Sigmoid colon (tissue), 7 donors: ENCODE measurements at regions of chr16 and their contacts with region 1.

Region 1: DNA sequence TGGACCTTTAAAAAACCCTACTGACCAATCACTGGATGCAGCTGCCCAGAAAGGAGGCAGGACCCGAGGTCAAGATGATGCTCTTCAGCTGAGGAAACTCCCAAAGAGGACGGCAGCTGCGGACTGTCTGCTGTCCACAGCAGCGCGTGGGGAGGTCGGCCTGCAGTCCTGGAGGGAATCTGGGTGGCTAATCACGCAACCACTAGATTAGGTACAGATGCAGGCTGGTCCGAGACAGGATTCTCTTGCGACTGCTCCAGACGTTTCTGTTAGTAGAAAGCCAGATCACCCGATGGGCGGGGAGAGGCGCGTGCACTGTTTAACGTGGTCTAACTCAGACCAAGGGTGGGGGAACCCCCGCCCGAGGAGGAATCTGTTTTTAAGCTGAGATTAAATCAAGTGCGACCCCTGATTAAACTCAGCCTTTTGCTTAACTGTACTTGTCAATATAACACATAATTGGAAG is 8.8 kb downstream of the CTRB2 start:
- DNase-seq: no peak
- H3K4me3 ChIP-seq: no peak overlapping the region
- H3K27ac ChIP-seq: no peak overlapping the region
- H3K4me1 ChIP-seq: peaks cover 0 to 8% (median 3%) of the 10 kb centered on the region in 4 donors
- H3K27me3 ChIP-seq: peaks cover 0 to 30% (median 0%) of the 10 kb centered on the region in 3 donors
- CTCF ChIP-seq: no peak
- EP300 ChIP-seq: no peak
- POLR2A ChIP-seq: no peak

Region 2: DNA sequence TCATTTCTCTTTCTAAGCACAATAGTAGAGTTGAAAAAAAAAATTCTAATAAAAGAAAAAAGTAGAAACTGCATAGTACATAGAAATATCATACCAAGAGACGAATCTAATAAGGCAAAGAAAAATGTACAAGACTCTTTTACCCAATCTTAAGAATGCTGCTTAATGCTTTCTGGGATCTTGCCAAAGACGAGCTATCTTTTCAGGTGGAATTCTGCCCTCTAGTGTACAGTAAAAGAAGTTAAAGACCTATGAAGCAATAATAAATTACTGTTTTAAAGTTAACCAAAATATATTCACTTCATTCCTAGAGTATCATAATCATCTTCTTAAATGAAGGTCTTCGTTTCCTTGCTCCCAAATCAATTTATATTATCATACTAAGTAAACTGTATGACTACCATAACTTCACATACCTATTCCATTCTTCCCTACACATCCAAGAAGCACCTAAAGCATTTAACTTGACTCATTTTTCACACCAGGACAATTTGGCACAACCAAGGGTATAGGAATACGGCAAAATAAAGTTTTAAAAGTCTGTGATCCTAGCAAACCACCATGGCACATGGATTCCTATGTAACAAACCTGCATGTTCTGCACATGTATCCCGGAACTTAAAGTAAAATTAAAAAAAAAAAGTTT is 187.5 kb after region 1 on chr16:
- intact Hi-C with region 1: loop called (anchors 1 kb)
- DNase-seq: no peak
- H3K4me3 ChIP-seq: no peak overlapping the region
- H3K27ac ChIP-seq: no peak overlapping the region
- H3K4me1 ChIP-seq: peaks cover 0 to 20% (median 4%) of the 10 kb centered on the region in 4 donors
- H3K27me3 ChIP-seq: no peaks in the 10 kb centered on the region
- CTCF ChIP-seq: peak; percentile 54 to 75 (median 64)
- EP300 ChIP-seq: no peak
- POLR2A ChIP-seq: no peak

Region 3: GRCh38 chr16:75402821-75403475 is 204.8 kb after region 1 on chr16:
- intact Hi-C with region 1: loop called (anchors 5 kb)
- DNase-seq: no peak
- H3K4me3 ChIP-seq: no peak overlapping the region
- H3K27ac ChIP-seq: peak overlapping the region; percentile 8 to 75 (median 37)
- H3K4me1 ChIP-seq: peaks cover 0 to 12% (median 10%) of the 10 kb centered on the region in 4 donors
- H3K27me3 ChIP-seq: no peaks in the 10 kb centered on the region
- CTCF ChIP-seq: peak in 3 of 4 experiments; percentile 59 to 79 (median 68)
- EP300 ChIP-seq: no peak
- POLR2A ChIP-seq: no peak